ENCODE measurements at regions of chr10 and their contacts with region 1.

Region 1: GRCh38 chr10:16787361-16787791 is 29.8 kb downstream of the RSU1 start:
- DNase-seq: no peak
- ATAC-seq: no peak

Region 2: GRCh38 chr10:16835228-16835627 is 47.9 kb after region 1 on chr10:
- intact Hi-C with region 1: no loop called
- DNase-seq: no peak
- ATAC-seq: no peak

Region 3: GRCh38 chr10:17851611-17852010 is 1064.2 kb after region 1 on chr10:
- intact Hi-C with region 1: loop called (anchors 10 kb)
- DNase-seq: peak; percentile 80
- ATAC-seq: peak; percentile 71